ENCODE measurements at regions of chr6 and their contacts with region 1.

Region 1: DNA sequence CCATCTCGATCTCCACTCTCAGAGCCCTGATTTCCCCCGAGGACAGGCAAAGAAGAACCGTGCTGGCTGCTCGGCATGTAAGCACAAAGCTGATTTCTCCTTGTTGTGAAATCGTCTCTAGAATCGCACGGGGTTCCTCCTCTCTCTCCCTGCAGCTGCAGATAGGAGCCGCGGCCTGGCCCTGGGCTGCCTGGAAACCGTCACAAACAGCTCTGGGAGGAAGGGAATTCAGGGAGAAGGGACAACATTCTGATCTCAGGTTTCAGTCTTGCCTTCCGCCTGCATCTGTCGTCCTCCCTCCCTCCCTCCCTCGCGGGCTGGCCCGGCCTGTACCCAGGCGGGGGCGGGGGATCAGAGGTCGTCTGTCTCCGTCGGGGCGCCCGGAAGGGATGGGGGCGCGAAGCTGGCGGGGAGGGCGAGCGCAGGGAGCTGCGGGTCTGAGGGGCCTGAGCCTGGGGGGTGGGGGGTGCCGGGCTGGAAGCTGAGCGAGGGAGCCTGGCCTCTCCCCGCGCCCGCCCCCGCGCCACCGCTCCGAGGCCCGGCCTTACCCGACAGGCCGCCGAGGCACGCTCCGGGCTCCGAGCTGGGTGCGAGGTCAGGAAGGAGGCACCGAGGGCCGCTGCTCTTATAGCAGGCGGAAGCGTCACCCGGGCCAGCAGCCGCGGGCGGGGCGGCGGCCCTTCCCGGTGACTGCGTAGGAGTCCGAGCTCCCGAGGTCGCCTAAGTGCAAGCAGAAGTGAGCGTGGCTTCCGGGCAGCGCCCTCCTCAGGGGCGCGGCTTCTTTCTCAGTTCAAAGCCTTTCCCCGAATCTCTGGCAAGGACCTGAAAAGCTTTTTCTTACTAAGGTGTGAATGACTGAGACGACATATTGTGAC is at the start of gene SERPINB1:
- DNase-seq: peak; percentile 92 to 93
- H3K4me3 ChIP-seq: peak within 1 kb of the TSS; percentile 44
- H3K4me3 Mint-ChIP-seq: peak within 1 kb of the TSS; percentile 98
- H3K27ac Mint-ChIP-seq: peak within 1 kb of the TSS; percentile 97
- H3K4me1 ChIP-seq: peaks cover 42% of the 10 kb centered on the region
- H3K4me1 Mint-ChIP-seq: peaks cover 16% of the 10 kb centered on the region
- H3K27me3 ChIP-seq: no peaks in the 10 kb centered on the region
- H3K27me3 Mint-ChIP-seq: no peaks in the 10 kb centered on the region
- CTCF ChIP-seq: peak in 1 of 2 experiments; percentile 29
- total RNA-seq, gene SERPINB1: 75.6 and 81.9 TPM in 2 replicates

Region 2: DNA sequence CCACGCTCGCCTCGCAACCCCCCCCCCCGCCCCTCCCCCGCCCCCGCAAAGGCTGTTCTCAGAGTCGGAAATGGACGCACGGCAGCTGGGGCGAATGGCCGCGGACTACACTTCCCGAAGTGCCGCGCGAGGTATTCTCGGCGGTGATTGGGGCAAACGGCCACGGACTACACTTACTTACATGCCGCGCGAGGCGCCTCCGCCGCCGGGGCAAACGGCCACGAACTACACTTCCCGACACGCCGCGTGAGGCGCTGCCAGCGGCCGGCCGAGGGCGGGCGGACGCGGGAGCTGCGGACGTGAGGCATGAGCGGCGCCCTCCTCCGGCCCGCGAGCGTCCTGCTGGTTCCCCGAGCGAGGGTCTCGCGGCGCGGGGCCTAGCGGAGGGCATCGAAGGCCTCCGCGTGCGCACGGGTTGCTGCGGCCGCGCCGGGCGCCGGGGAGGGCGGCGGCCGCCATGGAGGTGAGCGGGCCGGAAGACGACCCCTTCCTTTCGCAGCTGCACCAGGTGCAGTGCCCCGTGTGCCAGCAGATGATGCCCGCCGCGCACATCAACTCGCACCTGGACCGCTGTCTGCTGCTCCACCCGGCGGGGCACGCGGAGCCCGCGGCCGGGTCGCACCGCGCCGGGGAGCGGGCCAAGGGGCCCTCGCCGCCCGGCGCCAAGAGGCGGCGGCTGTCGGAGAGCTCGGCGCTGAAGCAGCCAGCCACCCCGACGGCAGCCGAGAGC is 76.2 kb before region 1 on chr6 and contains the start of gene WRNIP1:
- CTCF ChIA-PET with region 1: interaction called, 7 read pairs
- POLR2A ChIA-PET with region 1: interaction called, 6 read pairs
- intact Hi-C with region 1: loop called (anchors 2 kb)
- DNase-seq: peak; percentile 97 to 98
- H3K4me3 ChIP-seq: peak within 1 kb of the TSS; percentile 90
- H3K4me3 Mint-ChIP-seq: peak within 1 kb of the TSS; percentile 72
- H3K27ac Mint-ChIP-seq: peak within 1 kb of the TSS; percentile 94
- H3K4me1 ChIP-seq: no peaks in the 10 kb centered on the region; the same call in 1 of the 2 replicates
- H3K4me1 Mint-ChIP-seq: peaks cover 18% of the 10 kb centered on the region
- H3K27me3 ChIP-seq: no peaks in the 10 kb centered on the region
- H3K27me3 Mint-ChIP-seq: no peaks in the 10 kb centered on the region
- CTCF ChIP-seq: peak; percentile 32 to 59
- total RNA-seq, gene WRNIP1: 46.5 and 51.7 TPM in 2 replicates

Region 3: DNA sequence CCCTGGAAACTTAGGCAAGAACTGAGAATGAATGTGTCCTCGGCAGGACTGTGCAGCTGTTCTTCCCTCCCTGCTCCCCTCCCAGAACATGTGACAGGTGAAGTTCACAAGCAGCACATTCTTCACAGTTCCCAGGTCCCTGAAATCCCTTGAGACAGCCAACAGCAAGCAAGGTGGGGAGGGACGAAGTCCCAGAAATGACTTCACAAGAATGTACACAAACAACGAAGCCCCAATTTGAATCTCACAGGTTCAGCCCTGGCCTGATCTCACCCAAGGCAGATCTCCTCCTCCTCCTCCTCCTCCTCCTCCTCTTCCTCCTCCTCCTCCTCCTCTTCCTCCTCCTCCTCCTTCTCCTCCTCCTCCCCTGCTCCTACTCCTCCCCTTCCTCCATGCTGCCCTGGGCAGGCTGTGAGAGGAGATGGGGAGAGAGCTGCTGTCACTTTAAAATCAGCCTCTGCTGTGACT is 43.9 kb before region 1 on chr6:
- CTCF ChIA-PET with region 1: interaction called, 8 read pairs
- POLR2A ChIA-PET with region 1: interaction called, 10 read pairs
- intact Hi-C with region 1: no loop called
- DNase-seq: peak; percentile 56 to 66
- H3K4me3 ChIP-seq: no peak overlapping the region
- H3K4me3 Mint-ChIP-seq: no peak overlapping the region
- H3K27ac Mint-ChIP-seq: no peak overlapping the region
- H3K4me1 ChIP-seq: peaks cover 8% of the 10 kb centered on the region
- H3K4me1 Mint-ChIP-seq: peaks cover 13% of the 10 kb centered on the region
- H3K27me3 ChIP-seq: no peaks in the 10 kb centered on the region
- H3K27me3 Mint-ChIP-seq: no peaks in the 10 kb centered on the region
- CTCF ChIP-seq: no peak

Region 4: GRCh38 chr6:2810092-2810671 is 31.3 kb before region 1 on chr6:
- CTCF ChIA-PET with region 1: interaction called, 3 read pairs
- POLR2A ChIA-PET with region 1: no interaction called
- intact Hi-C with region 1: loop called (anchors 2 kb)
- DNase-seq: peak in 1 of 2 experiments; percentile 19
- H3K4me3 ChIP-seq: no peak overlapping the region
- H3K4me3 Mint-ChIP-seq: no peak overlapping the region
- H3K27ac Mint-ChIP-seq: peak overlapping the region; percentile 2
- H3K4me1 ChIP-seq: peaks cover 5% of the 10 kb centered on the region; the same call in 1 of the 2 replicates
- H3K4me1 Mint-ChIP-seq: peaks cover 7% of the 10 kb centered on the region
- H3K27me3 ChIP-seq: no peaks in the 10 kb centered on the region
- H3K27me3 Mint-ChIP-seq: no peaks in the 10 kb centered on the region
- CTCF ChIP-seq: no peak

Region 5: DNA sequence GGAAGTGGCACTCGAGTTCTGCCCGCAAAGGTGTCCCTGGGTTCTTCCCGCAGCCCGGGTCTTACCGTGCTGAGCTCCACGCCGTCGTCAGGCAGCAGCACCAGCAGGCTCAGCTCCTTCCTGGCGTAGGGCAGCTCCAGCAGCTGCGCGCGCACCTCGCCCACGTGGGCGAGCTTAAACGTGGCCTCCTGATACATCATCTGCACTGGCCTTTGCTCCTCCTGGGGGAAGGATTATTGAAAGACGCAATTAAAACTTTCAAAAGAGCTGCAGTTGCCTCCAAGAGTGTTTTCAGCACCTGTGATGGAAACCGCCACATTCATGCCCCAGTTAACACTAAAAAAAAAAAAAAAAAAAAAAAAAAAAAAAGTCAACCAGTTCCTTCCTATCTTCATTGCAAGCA is 50.3 kb after region 1 on chr6:
- CTCF ChIA-PET with region 1: interaction called, 16 read pairs
- POLR2A ChIA-PET with region 1: interaction called, 20 read pairs
- intact Hi-C with region 1: loop called (anchors 5 kb)
- DNase-seq: peak; percentile 92 to 93
- H3K4me3 ChIP-seq: peak overlapping the region; percentile 71
- H3K4me3 Mint-ChIP-seq: peak overlapping the region; percentile 92
- H3K27ac Mint-ChIP-seq: peak overlapping the region; percentile 80
- H3K4me1 ChIP-seq: peaks cover 8% of the 10 kb centered on the region; the same call in 1 of the 2 replicates
- H3K4me1 Mint-ChIP-seq: peaks cover 10% of the 10 kb centered on the region
- H3K27me3 ChIP-seq: no peaks in the 10 kb centered on the region
- H3K27me3 Mint-ChIP-seq: no peaks in the 10 kb centered on the region
- CTCF ChIP-seq: no peak

Region 6: GRCh38 chr6:3052481-3053230 is 211.2 kb after region 1 on chr6:
- CTCF ChIA-PET with region 1: no interaction called
- POLR2A ChIA-PET with region 1: interaction called, 4 read pairs
- intact Hi-C with region 1: loop called (anchors 10 kb)
- DNase-seq: peak; percentile 63 to 74
- H3K4me3 ChIP-seq: peak overlapping the region; percentile 82
- H3K4me3 Mint-ChIP-seq: peak overlapping the region; percentile 84
- H3K27ac Mint-ChIP-seq: peak overlapping the region; percentile 89
- H3K4me1 ChIP-seq: peaks cover 13% of the 10 kb centered on the region
- H3K4me1 Mint-ChIP-seq: peaks cover 10% of the 10 kb centered on the region
- H3K27me3 ChIP-seq: no peaks in the 10 kb centered on the region
- H3K27me3 Mint-ChIP-seq: no peaks in the 10 kb centered on the region
- CTCF ChIP-seq: no peak

Region 7: DNA sequence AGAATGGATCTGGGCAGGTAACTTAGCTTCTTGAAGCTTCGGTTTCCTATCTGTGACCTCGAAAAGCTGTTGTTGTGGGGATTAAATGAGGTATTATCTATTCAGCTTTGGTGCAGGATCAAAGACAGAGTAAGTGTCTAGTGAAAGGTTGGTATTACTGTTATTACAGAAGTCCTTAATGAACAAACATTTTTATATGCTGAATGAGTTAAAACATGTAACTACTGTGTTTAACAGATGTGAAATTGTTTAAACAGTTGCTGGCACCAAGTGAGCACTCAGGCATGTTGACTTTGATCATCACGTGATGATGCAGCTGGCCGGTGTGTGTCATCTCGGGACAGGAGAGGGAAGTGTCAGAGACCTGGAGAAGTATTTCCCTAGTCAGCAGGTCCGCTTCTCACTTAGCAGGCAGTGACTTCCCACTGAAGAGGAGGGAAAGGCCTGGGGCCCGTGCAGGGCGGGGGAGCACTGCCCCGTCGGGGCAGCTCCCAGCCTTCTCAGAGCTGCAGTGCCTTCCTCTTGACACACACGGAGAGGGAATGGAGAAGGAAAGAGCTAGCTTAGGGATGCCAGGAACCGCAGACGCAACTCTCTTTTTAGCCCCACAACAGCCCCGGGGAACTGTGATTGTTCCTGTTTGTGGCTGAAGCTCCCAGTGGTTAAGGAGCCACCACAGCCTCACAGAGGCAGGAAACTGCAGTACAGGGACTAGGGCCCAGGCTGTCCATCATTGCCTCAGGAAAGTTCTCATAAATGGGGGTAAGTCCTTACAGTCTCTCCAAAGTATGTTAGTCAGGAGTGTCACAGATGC is 297.8 kb after region 1 on chr6:
- CTCF ChIA-PET with region 1: no interaction called
- POLR2A ChIA-PET with region 1: no interaction called
- intact Hi-C with region 1: no loop called
- DNase-seq: peak; percentile 79 to 85
- H3K4me3 ChIP-seq: no peak overlapping the region
- H3K4me3 Mint-ChIP-seq: peak overlapping the region; percentile 48
- H3K27ac Mint-ChIP-seq: peak overlapping the region; percentile 70
- H3K4me1 ChIP-seq: peaks cover 42% of the 10 kb centered on the region
- H3K4me1 Mint-ChIP-seq: peaks cover 33% of the 10 kb centered on the region
- H3K27me3 ChIP-seq: no peaks in the 10 kb centered on the region
- H3K27me3 Mint-ChIP-seq: no peaks in the 10 kb centered on the region
- CTCF ChIP-seq: no peak